ENCODE measurements at regions of chr1 and their contacts with region 1.

Region 1: GRCh38 chr1:25037174-25038074 is 107.3 kb upstream of the RUNX3 start:
- DNase-seq: no peak
- ATAC-seq: peak; percentile 33
- H3K4me3 ChIP-seq: no peak overlapping the region
- H3K27ac ChIP-seq: peak overlapping the region; percentile 69
- H3K4me1 ChIP-seq: peaks cover 51% of the 10 kb centered on the region
- H3K27me3 ChIP-seq: no peaks in the 10 kb centered on the region
- CTCF ChIP-seq: peak; percentile 67 to 90 (median 79)
- EP300 ChIP-seq: no peak
- POLR2A ChIP-seq: no peak
- RAD21 ChIP-seq: peak; percentile 74

Region 2: GRCh38 chr1:24935615-24936484 is 101.6 kb before region 1 on chr1:
- CTCF ChIA-PET with region 1: interaction called, 128 read pairs
- POLR2A ChIA-PET with region 1: interaction called, 75 read pairs
- RAD21 ChIA-PET with region 1: interaction called, 150 read pairs
- SMC1A ChIA-PET with region 1: interaction called, 239 read pairs
- in situ Hi-C with region 1: no loop called
- intact Hi-C with region 1: no loop called
- DNase-seq: peak; percentile 74
- ATAC-seq: peak; percentile 56
- H3K4me3 ChIP-seq: peak overlapping the region; percentile 17; the same call in 1 of the 2 replicates
- H3K27ac ChIP-seq: peak overlapping the region; percentile 61
- H3K4me1 ChIP-seq: peaks cover 52% of the 10 kb centered on the region
- H3K27me3 ChIP-seq: no peaks in the 10 kb centered on the region
- CTCF ChIP-seq: no peak
- EP300 ChIP-seq: no peak
- POLR2A ChIP-seq: peak; percentile 44; the same call in 1 of the 2 replicates
- RAD21 ChIP-seq: no peak

Region 3: GRCh38 chr1:24964811-24965570 is 72.4 kb before region 1 on chr1:
- CTCF ChIA-PET with region 1: interaction called, 396 read pairs
- POLR2A ChIA-PET with region 1: interaction called, 169 read pairs
- RAD21 ChIA-PET with region 1: interaction called, 214 read pairs
- SMC1A ChIA-PET with region 1: interaction called, 292 read pairs
- in situ Hi-C with region 1: loop called (anchors 5 kb)
- intact Hi-C with region 1: loop called (anchors 1 kb)
- DNase-seq: peak; percentile 96
- ATAC-seq: peak; percentile 81
- H3K4me3 ChIP-seq: peak overlapping the region; percentile 97
- H3K27ac ChIP-seq: peak overlapping the region; percentile 98
- H3K4me1 ChIP-seq: peaks cover 29% of the 10 kb centered on the region
- H3K27me3 ChIP-seq: no peaks in the 10 kb centered on the region
- CTCF ChIP-seq: no peak
- EP300 ChIP-seq: peak in 1 of 2 experiments; percentile 84; a peak in 3 of 4 replicates
- POLR2A ChIP-seq: peak; percentile 86
- RAD21 ChIP-seq: peak; percentile 19; the same call in 1 of the 2 replicates

Region 4: DNA sequence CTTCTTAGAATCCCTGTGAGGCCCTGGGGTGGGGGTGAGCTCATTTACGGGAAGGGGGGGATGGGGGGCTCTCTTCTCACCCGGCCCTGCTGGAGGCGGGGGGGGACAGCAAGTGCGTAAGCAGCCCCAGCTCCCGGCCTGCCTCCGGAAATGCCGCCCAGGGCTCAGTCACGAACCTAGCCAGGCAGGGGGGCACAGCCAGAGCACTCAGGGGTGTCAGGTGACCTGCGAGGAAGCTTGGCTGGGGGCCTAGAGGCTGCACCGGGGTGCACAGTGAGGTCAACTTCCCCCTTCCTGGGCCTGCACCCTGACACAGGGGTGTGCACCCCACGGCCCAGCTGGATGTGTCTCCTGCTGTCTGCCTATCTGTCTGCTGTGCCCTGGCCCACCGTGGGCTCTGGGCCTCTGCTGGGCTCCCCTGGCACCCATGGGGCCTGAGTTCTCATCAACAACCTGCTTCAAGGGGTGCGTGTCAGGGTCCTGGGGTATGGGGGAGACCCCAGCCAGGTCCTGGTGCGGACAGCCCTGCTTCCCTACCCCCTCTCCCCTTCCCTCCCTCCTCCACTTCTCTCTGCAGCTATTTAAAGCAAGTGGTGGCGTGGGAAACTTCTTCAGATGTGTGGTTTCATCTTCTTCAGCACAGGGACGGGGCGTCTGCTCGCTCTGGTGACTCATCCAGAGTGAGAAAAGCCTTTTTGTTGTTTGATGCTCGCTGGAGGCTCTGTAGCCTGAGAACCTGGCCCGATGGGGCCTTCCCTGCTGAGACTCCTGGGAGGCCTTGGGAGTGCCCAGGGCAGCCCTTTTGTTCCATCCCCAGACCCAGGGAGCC is 14.8 kb before region 1 on chr1:
- CTCF ChIA-PET with region 1: interaction called, 69 read pairs
- POLR2A ChIA-PET with region 1: interaction called, 66 read pairs
- RAD21 ChIA-PET with region 1: interaction called, 127 read pairs
- SMC1A ChIA-PET with region 1: interaction called, 110 read pairs
- in situ Hi-C with region 1: no loop called
- intact Hi-C with region 1: loop called (anchors 1 kb)
- DNase-seq: peak; percentile 97
- ATAC-seq: peak; percentile 85
- H3K4me3 ChIP-seq: peak overlapping the region; percentile 56
- H3K27ac ChIP-seq: peak overlapping the region; percentile 100
- H3K4me1 ChIP-seq: peaks cover 94% of the 10 kb centered on the region
- H3K27me3 ChIP-seq: no peaks in the 10 kb centered on the region
- CTCF ChIP-seq: no peak
- EP300 ChIP-seq: peak; percentile 96 to 97
- POLR2A ChIP-seq: no peak
- RAD21 ChIP-seq: peak; percentile 34

Region 5: GRCh38 chr1:25105836-25106235 is 68.4 kb after region 1 on chr1:
- CTCF ChIA-PET with region 1: interaction called, 56 read pairs
- POLR2A ChIA-PET with region 1: no interaction called
- RAD21 ChIA-PET with region 1: interaction called, 30 read pairs
- SMC1A ChIA-PET with region 1: interaction called, 61 read pairs
- in situ Hi-C with region 1: no loop called
- intact Hi-C with region 1: loop called (anchors 1 kb)
- DNase-seq: no peak
- ATAC-seq: no peak
- H3K4me3 ChIP-seq: no peak overlapping the region; the same call in 1 of the 2 replicates
- H3K27ac ChIP-seq: no peak overlapping the region
- H3K4me1 ChIP-seq: peaks cover 23% of the 10 kb centered on the region
- H3K27me3 ChIP-seq: no peaks in the 10 kb centered on the region
- CTCF ChIP-seq: no peak
- EP300 ChIP-seq: no peak
- POLR2A ChIP-seq: no peak
- RAD21 ChIP-seq: no peak

Measured in GM12878 (cell line).